A673 (cell line): ENCODE measurements at regions of chr15 and their contacts with region 1.

Region 1: DNA sequence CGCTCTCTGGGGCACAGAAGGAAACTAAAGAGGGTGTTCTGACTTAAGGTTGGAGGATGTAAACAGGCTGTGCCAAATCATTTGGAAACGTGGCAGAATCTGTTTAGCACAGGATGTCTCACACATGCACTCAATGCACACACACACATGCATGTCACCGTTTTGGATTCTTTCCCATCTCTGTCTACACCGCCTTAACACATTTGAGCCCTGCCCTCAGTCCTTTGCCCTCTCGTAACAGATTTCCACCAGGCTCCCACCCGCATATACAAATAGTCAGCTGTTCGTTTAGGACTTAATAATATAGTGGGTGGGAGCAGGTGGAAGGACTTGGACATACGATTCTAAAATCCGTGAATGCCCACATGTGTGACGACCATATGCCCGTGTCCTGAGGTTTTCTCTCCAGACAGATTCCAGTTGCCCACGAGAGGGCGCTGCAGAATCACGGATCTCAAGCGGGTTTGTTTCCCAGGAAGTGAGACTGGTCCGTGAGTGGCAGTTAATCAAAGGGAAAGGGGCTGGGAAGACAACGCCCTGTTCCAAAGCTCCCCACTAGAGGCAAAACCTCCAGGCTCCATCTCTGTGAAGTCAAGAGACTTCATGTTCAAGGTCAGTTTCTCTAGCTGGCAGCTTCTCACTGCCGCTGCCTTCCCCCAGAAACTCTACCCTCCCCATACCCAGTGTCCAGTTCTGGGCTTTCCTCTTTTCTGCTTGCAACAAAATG is 44.5 kb downstream of the NOX5 start:
- DNase-seq: peak; percentile 97
- H3K4me3 ChIP-seq: no peak overlapping the region
- H3K27ac ChIP-seq: no peak overlapping the region
- H3K4me1 ChIP-seq: peaks cover 5% of the 10 kb centered on the region
- H3K27me3 ChIP-seq: no peaks in the 10 kb centered on the region
- CTCF ChIP-seq: peak; percentile 97

Region 2: GRCh38 chr15:69225355-69226025 is 166.5 kb after region 1 on chr15:
- CTCF ChIA-PET with region 1: interaction called, 11 read pairs
- POLR2A ChIA-PET with region 1: no interaction called
- intact Hi-C with region 1: loop called (anchors 1 kb)
- DNase-seq: peak; percentile 57
- H3K4me3 ChIP-seq: no peak overlapping the region
- H3K27ac ChIP-seq: no peak overlapping the region
- H3K4me1 ChIP-seq: peaks cover 5% of the 10 kb centered on the region
- H3K27me3 ChIP-seq: no peaks in the 10 kb centered on the region
- CTCF ChIP-seq: peak; percentile 56; the same call in 1 of the 2 replicates

Region 3: DNA sequence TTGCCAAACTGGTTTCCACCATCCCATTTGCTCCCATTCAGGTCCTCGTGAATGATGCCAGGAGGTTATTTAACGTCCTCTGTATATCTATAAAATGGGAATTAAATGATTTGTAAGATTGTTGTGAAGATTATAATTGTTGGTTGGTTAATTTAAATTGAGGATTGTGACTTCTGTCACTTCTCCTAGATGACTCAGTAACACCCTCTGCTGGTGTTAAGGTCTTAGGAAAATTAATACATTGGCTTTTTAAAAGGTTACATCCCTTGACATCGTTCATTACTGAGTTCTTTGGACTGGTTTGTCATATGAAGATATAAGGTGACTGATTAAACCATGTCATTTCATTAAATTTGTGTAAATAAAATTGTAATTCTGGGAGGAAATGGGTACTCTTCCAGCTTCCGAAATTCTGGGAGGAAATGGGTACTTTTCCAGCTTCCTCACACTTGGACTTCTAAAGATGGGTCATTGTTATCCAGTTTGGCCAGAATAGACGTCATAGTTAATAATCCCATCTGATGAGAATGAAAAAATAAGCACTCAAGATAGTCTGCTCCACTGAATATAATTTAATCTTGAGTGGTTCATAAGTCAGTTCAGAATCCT is 206.5 kb after region 1 on chr15:
- CTCF ChIA-PET with region 1: interaction called, 5 read pairs
- POLR2A ChIA-PET with region 1: no interaction called
- intact Hi-C with region 1: loop called (anchors 1 kb)
- DNase-seq: peak; percentile 59
- H3K4me3 ChIP-seq: no peak overlapping the region
- H3K27ac ChIP-seq: no peak overlapping the region
- H3K4me1 ChIP-seq: peaks cover 9% of the 10 kb centered on the region
- H3K27me3 ChIP-seq: no peaks in the 10 kb centered on the region
- CTCF ChIP-seq: peak; percentile 76

Region 4: GRCh38 chr15:69394556-69395282 is 335.7 kb after region 1 on chr15:
- CTCF ChIA-PET with region 1: interaction called, 20 read pairs
- POLR2A ChIA-PET with region 1: no interaction called
- intact Hi-C with region 1: loop called (anchors 1 kb)
- DNase-seq: peak; percentile 85
- H3K4me3 ChIP-seq: no peak overlapping the region
- H3K27ac ChIP-seq: no peak overlapping the region
- H3K4me1 ChIP-seq: peaks cover 11% of the 10 kb centered on the region
- H3K27me3 ChIP-seq: no peaks in the 10 kb centered on the region
- CTCF ChIP-seq: peak; percentile 98

Region 5: DNA sequence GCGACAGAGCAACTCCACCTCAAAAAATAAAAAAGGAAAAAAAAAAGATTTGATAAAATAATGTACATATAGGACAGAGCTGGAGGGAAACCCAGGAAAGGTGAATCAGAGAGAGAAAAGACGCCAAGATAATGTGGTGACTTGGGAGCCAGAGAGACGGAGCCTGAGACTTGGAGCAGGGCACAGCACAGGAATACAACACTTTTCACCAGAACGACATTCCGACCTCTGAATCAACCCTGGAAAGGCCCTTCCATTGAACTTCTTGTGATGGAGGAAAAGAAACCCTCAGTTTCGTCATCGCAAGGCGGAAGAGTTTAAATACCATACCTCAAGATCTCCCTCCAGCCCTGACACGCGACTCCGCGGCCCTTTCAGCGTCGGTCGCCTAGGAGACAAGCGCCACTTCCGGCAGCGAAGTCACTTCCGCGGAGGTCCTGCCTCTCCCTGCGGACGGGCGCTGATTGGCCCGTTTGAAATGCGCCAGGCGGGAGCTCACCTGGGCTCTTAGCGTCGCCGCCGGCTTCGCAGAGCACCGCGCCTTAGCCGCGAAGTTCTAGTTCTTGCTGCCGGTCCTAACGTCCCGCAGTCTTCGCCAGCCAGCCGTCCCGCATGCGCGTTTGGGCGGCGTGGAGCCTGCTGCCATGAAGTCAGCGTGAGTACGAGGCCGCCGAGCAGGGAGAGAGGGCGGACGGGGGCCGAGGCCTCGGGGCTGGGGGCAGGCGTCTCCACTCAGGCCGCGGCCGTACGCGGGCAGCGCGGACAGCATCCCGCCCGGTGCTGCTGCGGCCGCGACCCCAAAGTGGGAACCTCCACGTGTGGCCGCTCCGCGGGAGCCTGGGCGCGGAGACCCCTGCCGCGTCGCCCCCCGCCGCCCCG is 355.1 kb after region 1 on chr15 and contains the start of gene KIF23:
- CTCF ChIA-PET with region 1: interaction called, 5 read pairs
- POLR2A ChIA-PET with region 1: no interaction called
- intact Hi-C with region 1: loop called (anchors 5 kb)
- DNase-seq: peak; percentile 96
- H3K4me3 ChIP-seq: peak within 1 kb of the TSS; percentile 98
- H3K27ac ChIP-seq: peak within 1 kb of the TSS; percentile 95
- H3K4me1 ChIP-seq: peaks cover 7% of the 10 kb centered on the region
- H3K27me3 ChIP-seq: no peaks in the 10 kb centered on the region
- CTCF ChIP-seq: no peak
- total RNA-seq, gene KIF23: 124 TPM in 2 replicates

Region 6: GRCh38 chr15:69468241-69469121 is 409.5 kb after region 1 on chr15:
- CTCF ChIA-PET with region 1: interaction called, 3 read pairs
- POLR2A ChIA-PET with region 1: no interaction called
- intact Hi-C with region 1: loop called (anchors 5 kb)
- DNase-seq: no peak
- H3K4me3 ChIP-seq: no peak overlapping the region
- H3K27ac ChIP-seq: no peak overlapping the region
- H3K4me1 ChIP-seq: no peaks in the 10 kb centered on the region
- H3K27me3 ChIP-seq: no peaks in the 10 kb centered on the region
- CTCF ChIP-seq: no peak